ENCODE measurements at regions of chr1 and their contacts with region 1.

Region 1: DNA sequence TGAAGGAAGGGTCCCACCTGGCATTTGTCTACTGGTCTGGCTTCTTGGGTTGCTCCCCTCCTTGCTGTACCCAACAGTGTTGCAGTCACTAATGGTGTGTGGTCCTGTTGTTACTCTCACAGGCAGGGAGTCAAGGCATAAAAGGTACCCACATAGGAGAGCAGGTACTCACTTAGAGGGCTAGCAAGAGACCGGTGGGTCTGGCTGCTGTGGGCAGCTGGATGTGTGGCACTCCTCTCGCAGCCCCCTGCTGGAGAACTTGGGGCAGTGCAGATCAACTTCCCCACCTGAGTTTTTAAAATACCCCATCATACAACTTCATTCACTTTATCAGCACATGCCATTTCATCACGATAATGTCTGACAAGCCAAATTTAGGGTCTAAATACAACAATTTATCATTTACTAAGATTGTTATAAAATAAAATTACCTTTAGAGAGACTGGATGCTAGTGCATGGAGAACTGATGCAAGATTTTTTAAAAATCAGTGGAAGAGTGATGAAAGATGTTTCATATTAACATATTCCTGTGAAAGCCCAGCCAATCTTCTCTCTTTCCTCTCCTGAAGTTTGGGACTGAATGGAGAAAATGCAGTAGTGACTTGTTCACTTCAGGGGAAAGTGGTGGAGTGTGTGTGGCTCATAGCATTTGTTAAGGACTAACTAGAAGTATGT is 42.8 kb downstream of the ACP6 start:
- DNase-seq: no peak
- H3K4me3 ChIP-seq: no peak overlapping the region
- CTCF ChIP-seq: peak; percentile 89

Region 2: DNA sequence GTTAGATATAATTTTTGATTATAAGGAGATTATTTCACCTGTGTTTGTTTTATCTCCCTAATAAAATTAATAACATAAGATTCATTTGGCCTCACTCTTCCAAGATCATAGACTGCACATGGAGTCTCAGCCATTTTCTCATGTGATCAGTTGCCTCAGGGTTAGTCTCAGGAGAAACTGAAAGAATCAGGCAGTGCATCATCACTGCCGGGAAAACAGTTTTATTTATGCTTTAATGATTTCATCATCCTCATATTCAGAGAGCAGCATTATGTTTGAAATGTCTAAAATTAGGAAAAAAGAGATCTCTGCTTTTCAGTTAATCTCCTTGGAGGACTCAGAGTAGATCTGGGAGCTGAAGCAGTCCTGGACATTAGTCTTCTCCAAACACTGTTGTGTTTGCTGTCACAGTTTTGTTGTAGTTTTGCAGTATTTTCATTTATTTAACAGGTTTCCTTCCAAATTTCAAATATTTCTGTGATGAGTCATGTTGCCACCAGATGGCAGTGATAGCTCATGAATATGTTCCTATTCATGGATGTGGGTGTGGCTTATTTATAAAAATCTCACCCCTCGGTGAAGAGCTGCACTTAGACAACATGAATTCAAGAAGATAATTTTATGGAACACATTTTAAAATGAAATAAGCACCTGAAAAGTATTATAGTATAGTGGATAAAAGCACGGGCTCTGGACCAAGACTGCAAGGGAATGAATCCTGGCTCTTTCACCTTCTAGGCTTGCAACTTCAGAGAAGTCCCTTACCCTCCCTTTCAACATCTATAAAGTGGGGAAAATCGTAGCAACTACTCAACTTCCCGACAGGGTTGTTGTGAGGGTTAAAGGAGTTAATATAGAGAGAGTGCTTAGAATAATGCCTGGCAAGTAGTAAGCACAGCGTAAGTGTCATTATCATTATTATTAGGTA is 353.9 kb before region 1 on chr1:
- CTCF ChIA-PET with region 1: interaction called, 17 read pairs
- POLR2A ChIA-PET with region 1: no interaction called
- DNase-seq: peak; percentile 42
- H3K4me3 ChIP-seq: no peak overlapping the region; the same call in 1 of the 2 replicates
- CTCF ChIP-seq: peak; percentile 26

Region 3: GRCh38 chr1:147605591-147605990 is 22.0 kb before region 1 on chr1:
- CTCF ChIA-PET with region 1: interaction called, 31 read pairs
- POLR2A ChIA-PET with region 1: no interaction called
- DNase-seq: peak; percentile 42
- H3K4me3 ChIP-seq: no peak overlapping the region
- CTCF ChIP-seq: no peak

Region 4: GRCh38 chr1:147611021-147611426 is 16.5 kb before region 1 on chr1:
- CTCF ChIA-PET with region 1: interaction called, 31 read pairs
- POLR2A ChIA-PET with region 1: no interaction called
- DNase-seq: no peak
- H3K4me3 ChIP-seq: no peak overlapping the region
- CTCF ChIP-seq: no peak

Measured in AG04449 (cell line).